Activated CD4-positive, alpha-beta memory T cell treated with anti-CD3 and anti-CD28 coated beads for 36 hours (primary cell): ENCODE measurements at regions of chr16 and their contacts with region 1.

Region 1: DNA sequence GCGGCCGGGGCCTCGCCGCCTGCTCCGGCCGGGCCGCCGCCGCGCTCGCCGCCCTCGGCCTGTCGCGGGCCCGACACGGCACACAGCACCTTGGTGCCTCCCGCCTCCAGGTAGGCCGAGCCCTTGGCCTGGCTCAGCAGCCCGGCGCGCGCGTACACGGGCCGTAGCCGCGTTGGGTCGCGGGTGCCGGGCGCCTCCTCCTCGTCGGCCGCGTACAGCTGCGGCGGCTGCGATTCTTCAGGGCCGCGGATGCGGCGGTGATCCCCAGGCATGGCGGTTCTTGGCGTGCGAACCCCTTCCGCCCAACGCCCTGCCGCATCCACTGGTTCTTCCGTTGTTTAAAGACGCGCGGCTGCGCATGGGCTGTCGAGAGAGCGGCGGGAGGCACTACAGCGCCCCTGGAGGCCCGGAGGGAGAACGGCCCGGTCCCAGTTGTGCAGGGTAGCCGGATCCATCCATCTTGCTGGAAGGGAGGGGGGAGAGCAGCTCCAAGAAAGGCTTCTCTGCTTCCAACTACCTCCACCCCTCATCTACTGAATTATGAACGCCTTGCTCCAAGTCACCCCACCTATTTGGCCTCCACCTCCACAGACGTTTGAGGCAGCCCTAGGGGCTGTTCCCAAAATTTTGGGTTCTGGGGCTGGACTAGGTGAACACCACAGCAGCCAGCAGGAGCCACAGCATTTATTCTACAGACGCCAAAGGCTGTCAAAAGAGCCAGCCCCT is at the start of gene EXOSC6:
- DNase-seq: peak; percentile 96
- H3K4me3 Mint-ChIP-seq: peak within 1 kb of the TSS; percentile 84
- H3K27ac Mint-ChIP-seq: peak within 1 kb of the TSS; percentile 94
- H3K4me1 Mint-ChIP-seq: peaks cover 19% of the 10 kb centered on the region
- H3K27me3 Mint-ChIP-seq: no peaks in the 10 kb centered on the region
- total RNA-seq, gene EXOSC6: 22.3 to 24.5 TPM

Region 2: GRCh38 chr16:70267516-70267915 is 15.7 kb after region 1 on chr16:
- CTCF ChIA-PET with region 1: interaction called, 26 read pairs
- POLR2A ChIA-PET with region 1: interaction called, 5 read pairs
- intact Hi-C with region 1: no loop called
- DNase-seq: peak; percentile 40
- H3K4me3 Mint-ChIP-seq: no peak overlapping the region
- H3K27ac Mint-ChIP-seq: no peak overlapping the region
- H3K4me1 Mint-ChIP-seq: no peaks in the 10 kb centered on the region
- H3K27me3 Mint-ChIP-seq: no peaks in the 10 kb centered on the region

Region 3: DNA sequence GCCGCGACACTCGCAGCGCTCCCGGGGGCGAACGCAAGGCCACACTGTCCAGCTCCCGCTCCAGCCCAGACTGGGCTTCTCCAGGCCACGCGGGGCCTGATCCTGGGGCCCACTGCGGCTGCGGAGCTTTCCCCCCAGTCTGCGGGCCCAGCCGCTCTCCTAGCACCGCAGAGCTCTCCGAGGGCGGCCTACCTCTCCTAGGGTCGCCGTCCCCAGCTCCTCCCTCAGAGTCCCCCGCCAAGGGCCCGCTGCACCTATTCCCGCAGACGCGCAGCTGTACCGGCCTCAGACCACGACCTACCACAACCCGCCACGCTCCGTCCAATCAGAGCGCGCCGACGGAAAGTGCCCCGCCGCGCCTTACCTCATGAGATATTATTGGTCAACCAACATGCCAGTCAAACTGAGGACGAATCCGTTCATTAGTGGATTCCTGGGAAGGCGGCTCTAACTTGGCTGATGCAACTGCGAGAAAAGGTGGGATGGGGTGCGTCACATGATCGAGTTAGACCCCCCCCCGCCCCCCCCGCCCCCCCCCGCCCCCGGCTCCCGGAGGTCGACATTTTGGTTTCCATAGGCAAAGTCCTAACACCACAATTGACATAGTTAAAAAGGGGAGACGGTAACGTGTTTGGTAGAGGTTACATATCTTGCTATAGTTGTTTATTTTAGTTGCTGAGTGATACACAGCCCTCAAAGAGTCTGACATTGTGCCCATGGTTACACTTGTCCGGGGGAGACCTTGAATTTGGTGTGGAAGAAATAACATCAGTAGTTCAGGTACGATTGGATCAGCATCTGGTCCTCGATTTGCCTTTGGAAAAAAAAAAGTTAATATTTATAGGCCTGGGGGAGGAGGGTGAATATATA is 37.7 kb after region 1 on chr16 and contains the start of gene AARS1:
- CTCF ChIA-PET with region 1: interaction called, 11 read pairs
- POLR2A ChIA-PET with region 1: interaction called, 9 read pairs
- intact Hi-C with region 1: loop called (anchors 1 kb)
- DNase-seq: peak; percentile 97
- H3K4me3 Mint-ChIP-seq: peak within 1 kb of the TSS; percentile 98
- H3K27ac Mint-ChIP-seq: peak within 1 kb of the TSS; percentile 98
- H3K4me1 Mint-ChIP-seq: peaks cover 31% of the 10 kb centered on the region
- H3K27me3 Mint-ChIP-seq: peaks cover 2% of the 10 kb centered on the region
- total RNA-seq, gene AARS1: 165 to 170 TPM

Region 4: GRCh38 chr16:70331588-70332358 is 80.0 kb after region 1 on chr16:
- CTCF ChIA-PET with region 1: no interaction called
- POLR2A ChIA-PET with region 1: no interaction called
- intact Hi-C with region 1: no loop called
- DNase-seq: peak; percentile 21
- H3K4me3 Mint-ChIP-seq: no peak overlapping the region
- H3K27ac Mint-ChIP-seq: no peak overlapping the region
- H3K4me1 Mint-ChIP-seq: no peaks in the 10 kb centered on the region
- H3K27me3 Mint-ChIP-seq: no peaks in the 10 kb centered on the region

Region 5: DNA sequence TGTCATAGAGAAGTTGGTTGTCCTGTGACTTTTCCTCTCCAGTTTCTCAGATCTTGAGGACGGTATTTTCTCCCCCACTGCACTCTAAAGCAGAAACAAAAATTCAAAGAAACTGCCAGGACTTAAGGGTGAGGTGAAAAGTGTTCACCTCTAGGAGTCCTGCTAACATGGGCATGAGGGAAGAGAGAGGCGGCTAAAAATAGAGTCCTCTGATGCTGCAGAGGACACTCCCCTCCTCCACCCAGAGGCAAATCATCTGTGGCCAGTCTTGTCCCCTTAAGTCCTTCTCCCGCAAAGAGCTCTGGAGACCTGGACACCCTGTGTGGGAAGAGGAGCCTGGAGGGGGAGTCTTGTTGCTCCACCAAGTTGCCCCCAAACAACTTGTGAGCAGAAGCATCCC is 90.2 kb after region 1 on chr16:
- CTCF ChIA-PET with region 1: interaction called, 3 read pairs
- POLR2A ChIA-PET with region 1: interaction called, 10 read pairs
- intact Hi-C with region 1: no loop called
- DNase-seq: no peak
- H3K4me3 Mint-ChIP-seq: no peak overlapping the region
- H3K27ac Mint-ChIP-seq: peak overlapping the region; percentile 11
- H3K4me1 Mint-ChIP-seq: peaks cover 7% of the 10 kb centered on the region
- H3K27me3 Mint-ChIP-seq: no peaks in the 10 kb centered on the region

Region 6: GRCh38 chr16:70553645-70554044 is 301.9 kb after region 1 on chr16:
- CTCF ChIA-PET with region 1: interaction called, 3 read pairs
- POLR2A ChIA-PET with region 1: no interaction called
- intact Hi-C with region 1: loop called (anchors 10 kb)
- DNase-seq: no peak
- H3K4me3 Mint-ChIP-seq: no peak overlapping the region
- H3K27ac Mint-ChIP-seq: peak overlapping the region; percentile 50
- H3K4me1 Mint-ChIP-seq: peaks cover 10% of the 10 kb centered on the region
- H3K27me3 Mint-ChIP-seq: no peaks in the 10 kb centered on the region

Region 7: DNA sequence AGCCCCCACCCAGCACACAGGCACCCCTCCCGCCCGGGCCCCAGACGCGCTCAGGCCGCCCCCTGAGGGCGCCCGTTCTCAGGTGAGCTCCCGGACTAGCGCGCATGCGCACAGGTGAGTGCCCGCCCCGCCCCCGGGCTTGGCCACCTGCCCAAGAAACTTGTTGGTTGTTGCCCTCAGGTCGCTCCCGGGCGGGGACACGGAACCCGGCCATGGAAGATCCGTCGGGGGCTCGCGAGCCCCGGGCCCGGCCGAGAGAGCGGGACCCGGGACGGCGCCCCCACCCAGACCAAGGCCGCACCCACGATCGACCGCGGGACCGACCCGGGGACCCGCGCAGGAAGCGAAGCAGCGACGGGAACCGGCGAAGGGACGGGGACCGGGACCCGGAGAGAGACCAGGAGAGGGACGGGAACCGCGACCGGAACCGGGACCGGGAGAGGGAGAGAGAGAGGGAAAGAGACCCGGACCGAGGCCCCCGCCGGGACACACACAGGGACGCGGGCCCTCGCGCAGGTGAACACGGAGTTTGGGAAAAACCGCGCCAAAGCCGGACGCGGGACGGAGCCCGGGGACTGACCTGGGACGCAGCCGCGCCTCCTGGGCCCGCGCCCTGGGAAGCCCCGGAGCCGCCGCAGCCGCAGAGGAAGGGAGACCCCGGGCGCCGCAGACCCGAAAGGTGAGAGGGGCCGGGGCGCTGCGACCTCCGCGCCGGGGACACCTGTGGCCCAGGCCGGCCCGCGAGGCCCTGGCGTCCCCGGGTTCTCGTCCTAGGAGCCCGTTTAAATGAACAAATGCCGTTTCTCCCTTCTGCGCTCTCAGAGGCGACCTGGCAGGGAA is 1374.4 kb after region 1 on chr16 and contains the start of gene MARVELD3:
- CTCF ChIA-PET with region 1: no interaction called
- POLR2A ChIA-PET with region 1: no interaction called
- intact Hi-C with region 1: no loop called
- DNase-seq: peak; percentile 31
- H3K4me3 Mint-ChIP-seq: no peak within 1 kb of the TSS
- H3K27ac Mint-ChIP-seq: no peak within 1 kb of the TSS
- H3K4me1 Mint-ChIP-seq: peaks cover 7% of the 10 kb centered on the region
- H3K27me3 Mint-ChIP-seq: peaks cover 5% of the 10 kb centered on the region
- total RNA-seq, gene MARVELD3: not detected